ENCODE measurements at regions of chr12 and their contacts with region 1.

Region 1: DNA sequence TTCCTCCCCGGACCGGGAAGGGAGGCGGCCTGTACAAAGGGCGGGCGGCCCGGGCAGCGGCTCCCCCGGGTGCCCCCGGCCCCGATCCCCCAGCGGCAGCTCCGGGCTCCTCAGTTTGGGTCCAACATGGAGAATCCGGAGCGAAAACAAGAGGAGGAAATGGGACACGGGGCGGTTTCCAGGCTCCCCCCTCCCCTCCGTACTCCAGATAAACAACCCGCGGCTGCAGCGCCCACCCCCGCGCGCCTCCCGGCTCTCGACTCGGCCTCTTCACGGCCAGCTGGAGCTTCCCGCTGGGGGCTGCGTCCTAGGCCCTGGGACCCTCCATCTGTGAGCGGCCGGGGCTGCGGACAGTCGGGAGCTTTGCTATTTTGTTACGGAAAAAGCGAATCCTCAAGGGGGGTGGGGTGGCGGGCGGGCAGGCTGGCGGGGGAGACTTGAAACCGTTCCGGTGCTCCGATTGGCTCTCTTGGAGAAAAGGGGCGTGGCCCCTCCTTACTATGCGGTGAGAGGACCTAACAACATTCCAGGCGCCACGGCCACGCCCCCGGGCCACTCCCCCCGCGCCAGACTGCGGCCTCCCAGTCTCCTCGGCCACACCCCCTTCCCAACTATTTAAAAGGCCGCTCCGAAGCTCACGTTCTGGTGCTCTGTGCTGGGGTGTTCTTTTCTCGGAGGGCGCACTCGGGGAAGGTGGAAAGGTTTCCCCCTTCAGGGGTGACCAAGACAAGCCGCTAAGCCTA is at the start of gene CTDSP2:
- DNase-seq: peak; percentile 97
- H3K4me3 Mint-ChIP-seq: peak within 1 kb of the TSS; percentile 83
- H3K27ac Mint-ChIP-seq: peak within 1 kb of the TSS; percentile 75
- H3K4me1 Mint-ChIP-seq: peaks cover 40% of the 10 kb centered on the region
- H3K27me3 Mint-ChIP-seq: peaks cover 21% of the 10 kb centered on the region
- total RNA-seq, gene CTDSP2: 81.4 and 82.7 TPM in 2 replicates

Region 2: DNA sequence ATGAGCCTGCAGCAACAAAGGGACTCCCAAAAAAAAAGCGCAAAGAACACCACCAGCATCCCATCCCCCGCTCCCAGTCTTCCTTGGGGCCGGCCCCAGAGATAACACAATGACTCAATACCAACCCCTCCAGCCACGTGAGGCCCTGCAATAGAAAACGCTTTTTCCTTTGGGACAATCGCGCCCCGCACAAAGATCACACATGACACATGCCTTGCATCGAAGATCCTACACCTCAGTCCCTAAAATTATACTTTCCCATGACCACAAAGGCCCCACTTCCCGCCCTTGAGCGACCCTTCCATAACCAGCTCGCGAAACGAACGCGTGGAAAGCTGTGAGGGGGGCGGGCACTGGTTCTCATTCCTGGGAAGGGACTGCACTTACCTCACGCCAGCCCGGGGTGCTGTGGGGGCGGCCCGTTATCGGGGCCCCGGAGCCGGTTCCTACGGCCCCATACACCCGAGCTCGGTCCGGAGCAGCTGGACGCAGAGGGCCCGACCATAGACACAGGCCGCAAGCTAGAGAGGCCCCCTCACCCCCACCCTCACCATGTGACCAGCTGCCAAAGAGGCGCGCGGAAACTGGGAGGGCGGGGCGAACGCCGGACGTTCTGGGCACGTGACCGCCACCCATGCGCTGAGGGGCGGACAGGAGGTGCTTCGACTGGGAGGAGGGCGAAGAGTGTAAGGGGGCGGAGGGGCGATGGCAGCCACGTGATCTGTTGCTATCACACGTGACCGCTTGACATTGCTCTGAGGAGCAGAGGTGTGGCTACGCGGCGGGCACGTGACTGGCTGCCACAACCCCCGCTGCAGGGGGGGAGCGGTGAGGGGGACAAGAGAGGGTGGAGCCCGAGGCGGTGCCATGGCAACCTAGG is 94.7 kb before region 1 on chr12 and contains the start of gene CDK4:
- intact Hi-C with region 1: loop called (anchors 5 kb)
- DNase-seq: peak; percentile 99
- H3K4me3 Mint-ChIP-seq: peak within 1 kb of the TSS; percentile 96
- H3K27ac Mint-ChIP-seq: peak within 1 kb of the TSS; percentile 97
- H3K4me1 Mint-ChIP-seq: peaks cover 56% of the 10 kb centered on the region
- H3K27me3 Mint-ChIP-seq: no peaks in the 10 kb centered on the region
- total RNA-seq, gene CDK4: 240 and 248 TPM in 2 replicates

Region 3: GRCh38 chr12:57782608-57783465 is 63.9 kb before region 1 on chr12 and contains the start of gene TSFM:
- intact Hi-C with region 1: loop called (anchors 2 kb)
- DNase-seq: peak; percentile 99
- H3K4me3 Mint-ChIP-seq: peak within 1 kb of the TSS; percentile 99
- H3K27ac Mint-ChIP-seq: peak within 1 kb of the TSS; percentile 99
- H3K4me1 Mint-ChIP-seq: peaks cover 30% of the 10 kb centered on the region
- H3K27me3 Mint-ChIP-seq: no peaks in the 10 kb centered on the region
- total RNA-seq, gene TSFM: 62.5 and 64.3 TPM in 2 replicates

Region 4: GRCh38 chr12:57816855-57817151 is 29.9 kb before region 1 on chr12:
- intact Hi-C with region 1: no loop called
- DNase-seq: no peak
- H3K4me3 Mint-ChIP-seq: no peak overlapping the region
- H3K27ac Mint-ChIP-seq: no peak overlapping the region
- H3K4me1 Mint-ChIP-seq: peaks cover 1% of the 10 kb centered on the region
- H3K27me3 Mint-ChIP-seq: no peaks in the 10 kb centered on the region

Region 5: DNA sequence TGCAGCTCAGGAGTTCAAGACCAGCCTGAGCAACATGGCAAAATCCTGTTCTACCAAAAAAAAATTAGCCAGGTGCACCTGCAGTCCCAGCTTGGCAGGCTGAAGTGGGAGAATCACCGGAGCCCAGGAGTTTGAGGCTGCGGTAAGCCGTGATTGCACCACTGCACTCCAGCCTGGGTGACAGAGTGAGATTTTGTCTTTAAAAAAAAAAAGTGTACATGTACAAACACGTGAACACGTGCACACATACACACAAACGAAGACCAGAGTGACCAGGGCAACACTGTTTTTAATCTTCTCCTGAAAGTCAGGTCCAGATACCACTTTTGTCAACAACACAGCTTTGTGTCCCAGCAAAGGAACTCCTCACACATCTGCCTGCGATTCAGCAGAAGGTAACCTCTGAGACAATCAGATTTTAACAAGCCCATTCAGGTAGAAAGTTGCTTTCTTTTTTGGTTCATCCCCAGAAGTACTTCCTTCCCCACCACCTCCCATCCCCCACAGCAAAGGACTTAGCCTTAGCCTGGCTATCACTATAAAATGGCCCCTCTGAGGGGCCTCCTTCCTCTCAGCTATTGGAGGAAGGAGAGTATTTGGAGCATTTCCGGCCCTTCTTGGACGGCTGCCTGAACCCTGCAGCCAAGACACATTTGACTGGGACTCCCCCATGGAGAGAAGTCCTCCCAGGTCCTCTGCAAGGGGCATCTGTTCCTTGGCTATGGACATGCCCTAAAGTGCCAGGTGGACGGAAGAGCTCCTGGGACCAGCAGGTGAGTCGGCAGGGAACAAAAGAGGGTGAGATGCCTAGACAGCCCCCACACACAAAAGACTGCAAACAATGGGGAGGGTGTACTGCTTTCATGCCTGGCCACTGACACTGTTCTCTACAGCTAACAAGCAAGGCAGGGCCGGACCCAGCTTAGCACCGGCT is 10.0 kb before region 1 on chr12:
- intact Hi-C with region 1: loop called (anchors 1 kb)
- DNase-seq: peak; percentile 81
- H3K4me3 Mint-ChIP-seq: peak overlapping the region; percentile 67
- H3K27ac Mint-ChIP-seq: peak overlapping the region; percentile 93
- H3K4me1 Mint-ChIP-seq: peaks cover 74% of the 10 kb centered on the region
- H3K27me3 Mint-ChIP-seq: no peaks in the 10 kb centered on the region

Region 6: GRCh38 chr12:57899010-57899662 is 52.4 kb after region 1 on chr12:
- intact Hi-C with region 1: loop called (anchors 1 kb)
- DNase-seq: peak; percentile 89
- H3K4me3 Mint-ChIP-seq: peak overlapping the region; percentile 80
- H3K27ac Mint-ChIP-seq: peak overlapping the region; percentile 98
- H3K4me1 Mint-ChIP-seq: peaks cover 46% of the 10 kb centered on the region
- H3K27me3 Mint-ChIP-seq: peaks cover 2% of the 10 kb centered on the region

Region 7: DNA sequence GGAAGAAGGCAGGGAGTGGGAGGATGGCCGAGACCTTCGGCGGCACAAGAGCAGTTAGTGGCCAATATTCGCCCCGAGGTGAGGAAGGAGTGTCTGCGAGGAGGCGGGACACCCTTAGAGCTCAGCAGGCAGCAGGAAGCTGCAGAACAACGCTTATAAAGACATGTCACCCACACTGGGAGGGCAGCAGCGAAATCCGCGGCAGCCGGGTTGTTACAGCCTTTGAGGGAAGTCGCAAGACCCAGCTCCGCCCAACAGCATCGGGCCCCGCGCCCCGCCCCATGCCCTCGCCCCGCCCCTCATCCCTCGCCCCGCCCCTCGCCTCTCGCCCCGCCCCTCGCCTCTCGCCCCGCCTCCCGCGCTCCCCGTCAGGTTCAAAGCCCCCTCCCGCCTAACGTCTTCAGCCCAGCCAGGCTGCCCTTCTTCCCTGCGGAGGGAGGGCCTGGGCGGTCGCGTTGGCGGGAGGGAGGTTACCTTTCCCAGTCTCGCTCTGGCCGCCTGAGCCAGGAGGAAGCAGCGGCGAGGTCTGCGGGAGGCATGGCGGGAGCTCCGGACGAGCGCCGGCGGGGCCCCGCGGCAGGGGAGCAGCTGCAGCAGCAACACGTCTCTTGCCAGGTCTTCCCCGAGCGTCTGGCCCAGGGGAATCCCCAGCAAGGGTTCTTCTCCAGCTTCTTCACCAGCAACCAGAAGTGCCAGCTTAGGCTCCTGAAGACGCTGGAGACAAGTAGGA is 94.6 kb after region 1 on chr12 and contains the start of gene ATP23:
- intact Hi-C with region 1: loop called (anchors 1 kb)
- DNase-seq: peak; percentile 97
- H3K4me3 Mint-ChIP-seq: peak within 1 kb of the TSS; percentile 91
- H3K27ac Mint-ChIP-seq: peak within 1 kb of the TSS; percentile 97
- H3K4me1 Mint-ChIP-seq: peaks cover 36% of the 10 kb centered on the region
- H3K27me3 Mint-ChIP-seq: no peaks in the 10 kb centered on the region
- total RNA-seq, gene ATP23: 8.3 and 10.7 TPM in 2 replicates

Measured in activated CD4-positive, alpha-beta T cell treated with anti-CD3 and anti-CD28 coated beads, Interleukin-2, amount 10 ng/mL, durations not matched to agents 24 days and 14 days (primary cell).